ENCODE measurements at regions of chr16 and their contacts with region 1.

Region 1: DNA sequence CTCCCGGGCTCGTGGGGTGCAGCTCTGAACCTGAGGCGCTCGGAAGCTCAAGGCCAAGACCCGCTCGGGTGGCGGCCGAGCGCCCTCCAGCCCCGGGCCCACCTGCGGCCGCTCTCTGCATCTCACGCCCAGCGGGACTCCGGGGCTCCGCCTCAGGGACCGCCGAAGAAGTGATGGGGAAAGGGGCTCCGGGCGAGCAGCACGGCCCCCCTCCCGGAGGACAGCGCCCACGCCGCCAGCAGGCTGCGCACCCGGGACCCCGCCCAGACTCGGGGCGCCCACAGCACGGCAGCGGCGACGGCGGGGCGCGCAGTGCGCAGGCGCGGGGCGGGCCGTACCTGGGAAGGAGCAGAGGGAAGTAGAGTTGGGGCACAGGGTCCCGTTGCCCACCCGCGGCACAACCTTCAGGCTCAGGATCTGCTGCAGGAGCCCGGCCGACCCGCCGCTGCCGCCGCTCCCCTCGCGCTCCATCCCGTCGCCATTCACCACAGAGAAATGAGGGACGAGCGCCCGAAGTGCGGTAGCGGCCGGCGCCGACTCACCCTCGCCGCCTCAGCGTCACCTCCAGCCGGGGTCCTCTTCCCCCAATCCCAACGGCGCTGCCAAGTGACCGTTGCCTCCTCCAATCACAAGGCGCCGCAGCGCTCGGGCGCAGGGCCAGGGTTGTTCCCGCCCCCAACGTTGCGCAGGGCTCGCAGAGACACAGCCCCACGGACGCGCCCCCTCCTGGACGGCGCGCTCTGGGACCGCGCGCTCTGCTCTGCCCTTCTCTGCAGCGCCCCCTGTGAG is at the start of gene TMEM170A:
- DNase-seq: peak; percentile 100
- ATAC-seq: peak; percentile 99
- H3K4me3 ChIP-seq: peak within 1 kb of the TSS; percentile 51 to 78
- H3K27ac ChIP-seq: peak within 1 kb of the TSS; percentile 19 to 57
- H3K4me1 ChIP-seq: no peaks in the 10 kb centered on the region
- H3K27me3 ChIP-seq: no peaks in the 10 kb centered on the region
- total RNA-seq, gene TMEM170A: 20.5 to 21.5 TPM

Region 2: GRCh38 chr16:75198135-75198600 is 266.2 kb before region 1 on chr16:
- intact Hi-C with region 1: loop called (anchors 1 to 5 kb)
- DNase-seq: peak in 1 of 2 donors; percentile 59
- ATAC-seq: no peak
- H3K4me3 ChIP-seq: no peak overlapping the region
- H3K27ac ChIP-seq: no peak overlapping the region
- H3K4me1 ChIP-seq: no peaks in the 10 kb centered on the region
- H3K27me3 ChIP-seq: no peaks in the 10 kb centered on the region

Region 3: DNA sequence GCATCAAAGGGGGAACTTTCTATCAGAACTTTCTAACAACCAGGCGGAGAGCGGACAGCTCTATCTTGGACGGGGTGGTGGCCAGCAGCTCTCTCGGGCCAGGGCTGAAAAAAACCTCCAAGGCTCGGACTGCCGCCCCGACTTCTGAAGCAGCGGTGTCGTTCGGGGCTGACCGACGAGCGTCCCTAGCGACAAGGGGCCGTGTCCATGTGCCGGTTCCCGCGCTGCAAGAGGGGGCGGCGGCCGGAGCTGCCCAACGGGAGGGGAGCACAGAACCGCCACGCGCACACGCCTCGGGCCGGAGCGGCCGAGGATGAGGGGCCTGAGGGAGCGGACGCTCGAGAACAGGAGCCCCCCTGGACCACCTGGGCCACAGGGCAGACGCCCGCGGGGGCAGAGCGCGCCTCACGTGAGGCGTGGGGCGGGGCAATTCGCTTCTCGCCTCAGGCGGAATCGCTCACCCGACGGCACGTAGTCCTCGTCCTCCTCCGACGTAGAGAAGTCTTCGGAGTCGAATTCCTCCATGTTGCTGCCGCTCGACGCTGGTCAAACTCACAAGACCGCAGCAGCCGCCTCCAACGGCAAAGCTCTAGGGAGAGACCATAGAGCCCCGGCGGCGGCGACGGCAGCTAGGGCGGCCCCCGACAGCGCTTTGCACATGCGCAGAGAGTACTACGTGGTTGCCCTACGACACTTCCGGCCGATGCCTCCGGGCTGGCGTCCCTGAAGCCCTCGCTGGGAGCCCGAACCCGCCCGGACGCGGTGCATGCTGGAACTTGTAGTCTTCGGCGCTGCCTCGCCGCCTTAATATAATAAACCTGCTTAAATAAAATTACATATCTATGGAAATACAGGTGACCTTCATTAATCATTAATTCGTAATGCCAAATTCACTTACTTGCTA is 31.2 kb before region 1 on chr16 and contains the start of gene CFDP1:
- intact Hi-C with region 1: loop called in 1 of 2 experiments (anchors 2 kb)
- DNase-seq: peak; percentile 98
- ATAC-seq: peak; percentile 99
- H3K4me3 ChIP-seq: peak within 1 kb of the TSS; percentile 77 to 90
- H3K27ac ChIP-seq: peak within 1 kb of the TSS; percentile 73 to 96
- H3K4me1 ChIP-seq: peaks cover 0 to 3% of the 10 kb centered on the region in 2 donors
- H3K27me3 ChIP-seq: no peaks in the 10 kb centered on the region
- total RNA-seq, gene CFDP1: 55.9 to 59.1 TPM